Endothelial cell of umbilical vein (primary cell): ENCODE measurements at regions of chr4 and their contacts with region 1.

Region 1: DNA sequence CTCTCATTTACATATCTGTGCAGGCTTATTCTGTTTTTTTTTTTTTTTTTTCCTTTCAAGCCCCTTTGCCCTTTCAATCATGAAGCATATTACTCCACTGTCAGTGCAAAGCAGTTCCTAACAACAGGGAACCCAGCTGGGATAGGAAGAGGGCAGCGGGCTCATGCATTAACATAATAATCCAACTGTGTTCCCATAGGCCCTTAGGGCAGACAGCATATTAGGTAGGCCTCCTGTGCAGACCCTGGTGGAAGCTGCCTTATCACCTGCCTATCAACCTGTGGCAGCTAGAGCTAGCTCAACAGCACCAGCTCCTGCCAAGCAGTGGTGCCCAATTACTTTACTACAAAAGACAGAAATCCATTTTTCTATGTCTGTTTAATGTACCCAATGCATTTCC is 49.3 kb downstream of the SLC10A7 start:
- DNase-seq: no peak
- H3K4me3 ChIP-seq: no peak overlapping the region
- H3K27ac ChIP-seq: no peak overlapping the region
- H3K4me1 ChIP-seq: peaks cover 18% of the 10 kb centered on the region
- H3K27me3 ChIP-seq: no peaks in the 10 kb centered on the region
- CTCF ChIP-seq: no peak
- POLR2A ChIP-seq: no peak

Region 2: GRCh38 chr4:146462251-146462650 is 10.2 kb before region 1 on chr4:
- CTCF ChIA-PET with region 1: interaction called, 12 read pairs
- POLR2A ChIA-PET with region 1: no interaction called
- dilution Hi-C with region 1: no loop called
- intact Hi-C with region 1: no loop called
- DNase-seq: no peak
- H3K4me3 ChIP-seq: no peak overlapping the region
- H3K27ac ChIP-seq: no peak overlapping the region
- H3K4me1 ChIP-seq: no peaks in the 10 kb centered on the region
- H3K27me3 ChIP-seq: no peaks in the 10 kb centered on the region
- CTCF ChIP-seq: no peak
- POLR2A ChIP-seq: no peak

Region 3: DNA sequence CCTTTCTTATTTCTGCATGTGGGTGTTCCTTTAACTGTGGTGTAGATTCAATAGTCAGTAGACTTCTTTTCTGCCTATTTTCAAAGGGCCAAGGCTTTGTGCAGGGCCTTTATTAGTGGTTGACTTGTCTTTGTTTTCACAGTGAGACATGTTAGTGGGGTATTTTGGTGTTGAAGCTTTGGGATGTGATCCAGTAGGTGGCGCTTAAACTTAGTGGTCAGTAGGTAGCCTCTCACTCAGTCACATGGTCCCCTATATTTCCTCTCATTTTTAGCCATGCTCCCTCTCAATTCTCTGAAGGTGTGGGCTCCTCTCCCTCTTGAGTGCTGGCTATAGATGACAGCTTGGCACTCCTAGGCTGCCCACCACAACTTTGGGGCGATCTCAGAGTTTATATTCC is 72.7 kb after region 1 on chr4:
- CTCF ChIA-PET with region 1: no interaction called
- POLR2A ChIA-PET with region 1: no interaction called
- dilution Hi-C with region 1: no loop called
- intact Hi-C with region 1: no loop called
- DNase-seq: peak; percentile 9
- H3K4me3 ChIP-seq: no peak overlapping the region
- H3K27ac ChIP-seq: no peak overlapping the region
- H3K4me1 ChIP-seq: no peaks in the 10 kb centered on the region
- H3K27me3 ChIP-seq: peaks cover 2 to 6% of the 10 kb centered on the region in 2 experiments
- CTCF ChIP-seq: peak; percentile 18 to 33
- POLR2A ChIP-seq: no peak